Aorta (tissue), 5 donors: ENCODE measurements at regions of chr20 and their contacts with region 1.

Region 1: DNA sequence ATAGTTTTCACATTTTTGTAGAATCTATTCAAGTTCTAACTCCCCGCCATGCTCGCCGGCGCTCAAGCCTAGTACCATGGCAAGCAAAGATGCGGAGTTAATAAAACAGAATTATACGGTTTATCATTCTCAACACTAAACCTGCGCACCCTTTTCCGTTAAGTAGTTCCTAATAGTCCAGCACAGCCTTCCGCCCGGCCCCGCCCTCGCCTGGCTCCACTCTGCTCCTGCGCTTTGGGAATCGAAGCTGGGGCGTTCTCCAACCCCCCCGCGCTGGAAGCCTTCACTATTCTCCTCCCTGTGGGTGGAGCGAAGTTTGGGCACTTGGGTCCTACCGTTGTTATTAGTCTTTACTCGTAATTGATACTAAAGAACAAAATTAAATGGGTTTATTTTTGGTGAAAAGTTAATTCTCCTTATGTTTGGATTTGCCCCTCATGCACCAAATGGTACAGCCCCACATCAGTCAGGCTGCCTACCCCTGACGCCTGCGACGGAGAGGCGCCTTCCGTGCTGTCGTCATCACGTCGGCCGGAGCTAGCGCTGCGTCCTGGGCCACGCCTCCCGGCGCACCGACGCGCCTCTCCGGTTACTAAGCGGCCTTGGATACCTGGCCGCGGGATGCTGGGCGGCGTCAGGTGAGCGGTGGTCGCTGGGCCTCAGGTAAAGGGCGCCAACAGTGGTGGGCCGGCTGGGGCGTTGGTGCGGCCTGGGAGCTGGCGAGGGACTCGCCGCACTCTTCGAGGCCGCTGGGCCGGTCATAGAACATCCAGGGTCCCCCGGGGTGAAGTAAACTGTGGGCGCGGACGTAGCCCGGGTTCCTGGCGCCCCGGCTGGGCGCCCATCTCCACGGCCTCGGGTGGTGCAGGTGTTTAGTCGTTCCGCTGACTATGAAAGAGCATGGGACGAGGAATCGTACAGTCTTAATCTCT is at the start of gene IFT52:
- DNase-seq: peak; percentile 95 to 97
- ATAC-seq: peak; percentile 99
- H3K4me3 ChIP-seq: peak within 1 kb of the TSS; percentile 59 to 81
- H3K27ac ChIP-seq: peak within 1 kb of the TSS in 1 of 2 donors; percentile 29
- H3K4me1 ChIP-seq: no peaks in the 10 kb centered on the region
- H3K27me3 ChIP-seq: no peaks in the 10 kb centered on the region
- total RNA-seq, gene IFT52: 24.9 to 38.5 TPM

Region 2: DNA sequence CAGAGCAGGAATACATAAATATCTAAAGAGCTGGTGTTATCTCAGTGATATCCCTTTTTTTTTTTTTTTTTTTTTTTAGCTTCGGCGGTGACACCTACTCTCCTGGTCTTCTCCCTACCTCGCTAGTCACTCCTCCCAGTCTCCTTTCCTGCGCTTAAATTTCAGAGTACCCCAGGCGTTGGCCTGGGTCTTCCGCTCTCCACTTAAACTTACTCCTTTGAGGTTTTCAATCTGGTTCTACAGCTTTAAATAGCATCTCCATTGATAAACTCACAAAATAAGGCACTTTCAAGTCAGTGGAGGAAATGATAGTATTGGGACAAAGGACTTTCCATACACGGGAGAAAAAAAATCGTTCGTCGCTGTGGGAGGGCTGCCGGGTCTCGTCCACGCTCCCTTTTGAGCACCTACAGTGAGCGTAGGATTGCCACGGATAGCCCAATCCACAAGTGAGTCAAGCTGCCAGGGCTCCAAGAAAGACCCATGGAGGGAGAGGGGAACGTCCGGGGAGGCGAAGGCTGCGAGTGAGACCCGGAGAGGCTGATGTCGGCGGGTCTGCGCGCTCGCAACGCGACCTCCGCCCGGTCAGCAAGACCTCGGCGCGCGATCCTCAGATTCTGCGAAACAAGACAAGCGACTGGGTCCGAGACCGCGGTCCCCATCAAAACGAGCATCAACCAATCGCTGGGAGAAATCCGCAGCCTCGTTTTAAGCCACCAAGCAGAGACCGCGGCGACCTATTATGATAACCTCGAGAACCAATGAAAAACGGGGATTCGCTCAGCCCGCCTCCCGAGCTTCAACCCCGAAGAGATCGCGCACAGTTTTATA is 133.6 kb before region 1 on chr20:
- intact Hi-C with region 1: loop called in 1 of 2 experiments (anchors 2 kb)
- DNase-seq: peak; percentile 94
- ATAC-seq: peak; percentile 93
- H3K4me3 ChIP-seq: peak overlapping the region; percentile 1 to 48
- H3K27ac ChIP-seq: peak overlapping the region in 1 of 2 donors; percentile 100
- H3K4me1 ChIP-seq: peaks cover 0 to 2% of the 10 kb centered on the region in 2 donors
- H3K27me3 ChIP-seq: no peaks in the 10 kb centered on the region

Region 3: GRCh38 chr20:43537921-43538877 is 52.5 kb before region 1 on chr20:
- intact Hi-C with region 1: loop called in 1 of 2 experiments (anchors 2 kb)
- DNase-seq: peak; percentile 67 to 85
- ATAC-seq: peak; percentile 59
- H3K4me3 ChIP-seq: no peak overlapping the region
- H3K27ac ChIP-seq: no peak overlapping the region
- H3K4me1 ChIP-seq: no peaks in the 10 kb centered on the region
- H3K27me3 ChIP-seq: no peaks in the 10 kb centered on the region

Region 4: DNA sequence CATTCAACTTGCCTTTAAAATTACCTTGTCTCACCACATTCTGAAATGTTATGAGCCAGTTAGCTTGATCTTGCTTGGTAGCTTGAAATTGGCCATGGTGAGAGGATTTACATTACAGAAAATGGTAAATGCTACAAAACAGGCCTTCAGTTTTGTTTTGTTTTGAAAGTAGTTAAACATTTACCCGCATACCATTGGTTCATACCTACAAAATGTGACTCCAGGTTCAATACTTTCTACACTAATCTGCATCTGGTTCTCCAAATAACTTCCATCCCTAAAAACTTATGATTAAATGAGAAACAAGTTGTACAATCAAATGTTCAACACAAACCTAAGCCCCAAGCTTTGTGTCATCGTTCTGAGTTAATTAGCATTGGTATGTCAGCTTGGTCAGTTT is 45.8 kb after region 1 on chr20:
- intact Hi-C with region 1: no loop called
- DNase-seq: no peak
- ATAC-seq: no peak
- H3K4me3 ChIP-seq: no peak overlapping the region
- H3K27ac ChIP-seq: no peak overlapping the region
- H3K4me1 ChIP-seq: no peaks in the 10 kb centered on the region
- H3K27me3 ChIP-seq: no peaks in the 10 kb centered on the region

Region 5: GRCh38 chr20:44210422-44211176 is 619.9 kb after region 1 on chr20 and contains the start of gene OSER1:
- intact Hi-C with region 1: loop called in 1 of 2 experiments (anchors 10 kb)
- DNase-seq: peak; percentile 98 to 99
- ATAC-seq: peak; percentile 98
- H3K4me3 ChIP-seq: peak within 1 kb of the TSS; percentile 79 to 92
- H3K27ac ChIP-seq: peak within 1 kb of the TSS; percentile 78 to 92
- H3K4me1 ChIP-seq: peaks cover 0 to 7% of the 10 kb centered on the region in 2 donors
- H3K27me3 ChIP-seq: no peaks in the 10 kb centered on the region
- total RNA-seq, gene OSER1: 26.7 to 34.2 TPM